Activated CD4-positive, alpha-beta memory T cell treated with anti-CD3 and anti-CD28 coated beads for 36 hours (primary cell): ENCODE measurements at regions of chr1 and their contacts with region 1.

Region 1: GRCh38 chr1:241485554-241485992 is 34.0 kb downstream of the FH start:
- DNase-seq: no peak
- H3K4me3 Mint-ChIP-seq: no peak overlapping the region
- H3K27ac Mint-ChIP-seq: no peak overlapping the region
- H3K4me1 Mint-ChIP-seq: peaks cover 4% of the 10 kb centered on the region
- H3K27me3 Mint-ChIP-seq: peaks cover 6% of the 10 kb centered on the region

Region 2: GRCh38 chr1:240732390-240732789 is 753.2 kb before region 1 on chr1:
- CTCF ChIA-PET with region 1: interaction called, 4 read pairs
- POLR2A ChIA-PET with region 1: no interaction called
- intact Hi-C with region 1: loop called (anchors 5 kb)
- DNase-seq: no peak
- H3K4me3 Mint-ChIP-seq: no peak overlapping the region
- H3K27ac Mint-ChIP-seq: no peak overlapping the region
- H3K4me1 Mint-ChIP-seq: no peaks in the 10 kb centered on the region
- H3K27me3 Mint-ChIP-seq: no peaks in the 10 kb centered on the region

Region 3: GRCh38 chr1:241356519-241357365 is 128.8 kb before region 1 on chr1 and contains the start of gene RGS7:
- CTCF ChIA-PET with region 1: no interaction called
- POLR2A ChIA-PET with region 1: no interaction called
- intact Hi-C with region 1: loop called (anchors 10 kb)
- DNase-seq: peak; percentile 10
- H3K4me3 Mint-ChIP-seq: no peak within 1 kb of the TSS
- H3K27ac Mint-ChIP-seq: no peak within 1 kb of the TSS
- H3K4me1 Mint-ChIP-seq: peaks cover 5% of the 10 kb centered on the region
- H3K27me3 Mint-ChIP-seq: peaks cover 35% of the 10 kb centered on the region
- total RNA-seq, gene RGS7: not detected

Region 4: GRCh38 chr1:241503444-241503843 is 17.9 kb after region 1 on chr1:
- CTCF ChIA-PET with region 1: no interaction called
- POLR2A ChIA-PET with region 1: no interaction called
- intact Hi-C with region 1: no loop called
- DNase-seq: peak; percentile 19
- H3K4me3 Mint-ChIP-seq: no peak overlapping the region
- H3K27ac Mint-ChIP-seq: no peak overlapping the region
- H3K4me1 Mint-ChIP-seq: peaks cover 7% of the 10 kb centered on the region
- H3K27me3 Mint-ChIP-seq: no peaks in the 10 kb centered on the region

Region 5: DNA sequence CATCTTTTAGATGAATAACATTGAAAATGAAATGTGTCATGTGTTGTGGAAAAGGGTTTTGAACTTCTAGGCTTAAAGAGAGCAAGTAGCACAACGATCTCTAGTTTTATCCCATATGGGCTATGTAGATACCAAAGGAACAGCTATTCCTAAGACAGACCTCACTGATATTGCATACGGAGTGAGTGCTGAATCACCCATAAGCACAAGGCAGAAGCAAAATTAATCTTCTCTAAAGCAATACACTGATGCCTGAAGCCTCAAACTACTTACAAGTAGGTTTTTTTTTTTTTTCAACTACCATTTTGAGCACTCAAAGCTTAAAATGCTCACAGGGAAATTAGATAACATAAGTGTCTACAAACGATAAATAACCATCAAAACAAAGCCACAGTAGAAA is 41.6 kb after region 1 on chr1:
- CTCF ChIA-PET with region 1: no interaction called
- POLR2A ChIA-PET with region 1: no interaction called
- intact Hi-C with region 1: no loop called
- DNase-seq: no peak
- H3K4me3 Mint-ChIP-seq: no peak overlapping the region
- H3K27ac Mint-ChIP-seq: no peak overlapping the region
- H3K4me1 Mint-ChIP-seq: peaks cover 11% of the 10 kb centered on the region
- H3K27me3 Mint-ChIP-seq: peaks cover 26% of the 10 kb centered on the region

Region 6: GRCh38 chr1:241566651-241567050 is 81.1 kb after region 1 on chr1:
- CTCF ChIA-PET with region 1: no interaction called
- POLR2A ChIA-PET with region 1: no interaction called
- intact Hi-C with region 1: no loop called
- DNase-seq: no peak
- H3K4me3 Mint-ChIP-seq: no peak overlapping the region
- H3K27ac Mint-ChIP-seq: no peak overlapping the region
- H3K4me1 Mint-ChIP-seq: no peaks in the 10 kb centered on the region
- H3K27me3 Mint-ChIP-seq: peaks cover 4% of the 10 kb centered on the region